Activated naive CD4-positive, alpha-beta T cell treated with anti-CD3 and anti-CD28 coated beads, Interleukin-2, amount 10 ng/mL, durations not matched to agents 7 days and 5 days (primary cell): ENCODE measurements at regions of chr15 and their contacts with region 1.

Region 1: GRCh38 chr15:48877630-48878595 is at the start of gene EID1:
- DNase-seq: peak; percentile 94
- H3K4me3 Mint-ChIP-seq: peak within 1 kb of the TSS; percentile 93
- H3K27ac Mint-ChIP-seq: peak within 1 kb of the TSS; percentile 95
- H3K4me1 Mint-ChIP-seq: peaks cover 34% of the 10 kb centered on the region
- H3K27me3 Mint-ChIP-seq: peaks cover 5% of the 10 kb centered on the region

Region 2: DNA sequence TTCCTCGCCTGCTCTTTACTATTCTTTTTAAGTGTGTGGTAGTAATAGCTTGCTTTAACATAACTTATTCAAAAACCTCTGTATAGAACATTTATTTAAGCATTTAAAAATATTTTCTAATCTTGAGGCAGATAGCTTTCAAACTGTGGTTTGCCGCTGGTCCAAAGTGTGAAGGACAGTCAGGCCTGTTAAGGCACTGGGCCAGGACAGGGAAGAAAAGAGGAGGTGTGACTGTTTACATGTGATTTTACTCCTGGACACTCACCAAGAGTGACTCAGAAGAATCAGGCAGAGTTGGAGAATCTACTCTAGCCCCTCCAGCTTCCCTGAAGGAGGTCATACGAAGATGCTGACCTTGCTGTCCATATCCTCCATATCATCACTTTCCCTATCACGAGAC is 111.7 kb before region 1 on chr15:
- CTCF ChIA-PET with region 1: no interaction called
- DNase-seq: no peak
- H3K4me3 Mint-ChIP-seq: no peak overlapping the region
- H3K27ac Mint-ChIP-seq: no peak overlapping the region
- H3K4me1 Mint-ChIP-seq: no peaks in the 10 kb centered on the region
- H3K27me3 Mint-ChIP-seq: no peaks in the 10 kb centered on the region

Region 3: DNA sequence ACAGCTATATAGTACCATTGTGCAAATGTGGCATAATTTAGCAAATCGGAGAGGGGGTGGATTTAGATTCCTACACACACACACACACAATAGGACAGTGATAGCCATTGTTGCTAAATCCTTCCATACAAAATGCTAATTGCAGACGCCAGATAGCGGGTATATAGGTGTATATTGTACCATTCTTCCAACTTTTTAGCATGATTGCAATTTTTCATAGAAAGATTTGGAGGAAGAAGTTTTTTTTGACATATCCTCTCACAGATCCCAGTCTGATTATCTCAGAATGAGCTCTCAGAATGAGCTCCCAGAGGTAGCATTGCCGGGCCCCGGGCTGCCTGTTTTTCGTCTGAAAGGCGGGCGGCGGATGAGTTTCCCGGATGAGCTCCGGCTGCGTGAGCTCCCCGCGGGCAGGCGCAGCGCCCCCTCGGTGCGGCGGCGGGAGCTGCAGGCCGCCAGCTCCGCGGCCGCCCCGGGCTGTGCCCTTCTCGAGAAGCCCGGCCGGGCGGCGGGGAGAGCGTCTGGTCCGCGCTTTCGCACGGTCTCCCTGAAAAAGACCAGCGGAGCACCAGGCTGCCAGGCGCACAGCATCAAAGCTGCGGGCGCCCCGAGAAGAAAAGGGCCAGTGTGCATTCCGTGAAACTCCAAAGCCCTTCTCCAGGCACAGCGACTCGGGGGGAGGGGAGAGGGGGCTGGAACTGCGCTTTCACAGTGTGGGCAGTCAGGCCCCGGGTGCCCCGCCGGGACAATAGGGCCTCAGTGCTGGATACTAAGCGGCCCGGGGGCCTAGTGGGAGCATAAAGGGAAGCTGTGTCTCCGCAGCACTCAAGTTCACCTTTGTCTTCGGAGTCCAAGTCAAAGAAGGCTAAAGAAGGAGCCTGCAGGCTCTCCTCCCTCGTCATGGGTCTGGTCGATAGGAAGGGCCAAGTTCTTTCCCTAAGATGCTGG is 97.8 kb after region 1 on chr15:
- CTCF ChIA-PET with region 1: interaction called, 12 read pairs
- DNase-seq: peak; percentile 76
- H3K4me3 Mint-ChIP-seq: peak overlapping the region; percentile 52
- H3K27ac Mint-ChIP-seq: no peak overlapping the region
- H3K4me1 Mint-ChIP-seq: peaks cover 8% of the 10 kb centered on the region
- H3K27me3 Mint-ChIP-seq: peaks cover 46% of the 10 kb centered on the region